ENCODE measurements at regions of chr11 and their contacts with region 1.

Region 1: DNA sequence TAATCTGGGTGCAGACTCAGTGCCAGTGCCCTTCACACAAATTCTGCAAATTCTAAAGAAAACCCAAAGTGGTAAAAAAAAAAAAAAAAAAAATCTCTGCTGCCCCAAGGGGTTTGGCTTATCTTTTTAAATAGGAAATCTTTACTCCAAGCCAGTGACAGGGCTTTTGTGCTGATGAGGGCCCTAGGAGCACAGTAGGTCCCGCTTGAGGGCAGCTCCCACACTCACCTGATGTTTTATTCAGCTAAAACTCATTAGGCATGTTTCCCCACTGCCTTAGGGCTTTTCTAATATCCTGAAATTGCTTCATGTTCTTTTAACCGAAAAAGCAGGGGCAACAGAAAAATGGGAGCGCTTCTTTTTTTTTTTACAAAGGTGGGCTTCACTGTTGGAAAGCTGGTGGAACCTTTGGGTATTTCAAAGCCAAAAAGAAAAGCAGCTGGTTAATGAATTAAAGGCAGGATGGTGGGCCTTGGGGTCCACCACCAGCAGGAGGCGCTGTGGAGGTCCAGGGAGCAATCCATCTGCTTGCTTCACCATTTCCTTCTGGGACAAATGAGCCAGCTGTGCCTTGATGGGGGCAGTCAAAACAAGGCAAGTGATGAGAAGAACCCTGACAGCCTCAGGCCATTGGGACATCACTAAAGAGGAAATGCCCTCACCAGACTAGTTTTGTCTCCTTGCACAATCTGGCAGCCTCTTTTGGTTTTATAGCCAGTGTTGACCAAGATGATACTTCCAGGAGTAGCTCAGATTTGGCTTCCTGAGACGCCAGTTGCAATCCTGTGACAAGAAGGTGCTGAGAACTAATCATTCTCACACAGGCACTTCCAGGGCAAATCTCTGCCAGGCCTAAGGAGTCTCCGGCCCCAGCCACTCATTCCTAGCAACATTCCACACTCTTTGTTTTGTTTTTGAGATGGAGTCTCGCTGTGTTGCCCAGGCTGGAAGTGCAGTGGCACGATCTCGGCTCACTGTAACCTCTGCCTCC is 38.4 kb upstream of the WEE1 start:
- DNase-seq: no peak
- H3K4me3 ChIP-seq: no peak overlapping the region
- CTCF ChIP-seq: peak; percentile 63

Region 2: DNA sequence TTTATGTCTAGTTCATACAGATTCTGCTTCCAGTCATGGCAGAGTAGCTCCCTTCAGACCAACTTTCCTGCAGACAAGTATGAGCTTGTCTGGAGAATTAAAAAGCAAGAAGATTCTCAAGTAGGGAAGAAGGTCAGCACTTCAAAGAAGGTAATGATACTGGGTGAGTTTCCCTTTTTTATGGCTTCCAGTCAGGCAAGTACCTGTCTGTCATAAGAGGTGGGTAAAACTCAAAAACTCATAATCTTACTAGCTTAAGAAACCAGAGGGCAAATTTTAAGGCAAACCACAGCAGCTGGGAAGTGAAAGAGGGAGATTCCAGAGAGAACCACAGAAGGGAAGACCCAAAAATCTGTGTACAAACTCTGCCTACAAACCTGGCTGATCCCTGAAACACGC is 324.2 kb before region 1 on chr11:
- CTCF ChIA-PET with region 1: no interaction called
- POLR2A ChIA-PET with region 1: no interaction called
- DNase-seq: no peak
- H3K4me3 ChIP-seq: no peak overlapping the region
- CTCF ChIP-seq: no peak

Region 3: GRCh38 chr11:9516113-9516512 is 19.0 kb before region 1 on chr11:
- CTCF ChIA-PET with region 1: interaction called, 13 read pairs
- POLR2A ChIA-PET with region 1: no interaction called
- DNase-seq: no peak
- H3K4me3 ChIP-seq: no peak overlapping the region
- CTCF ChIP-seq: no peak

Region 4: DNA sequence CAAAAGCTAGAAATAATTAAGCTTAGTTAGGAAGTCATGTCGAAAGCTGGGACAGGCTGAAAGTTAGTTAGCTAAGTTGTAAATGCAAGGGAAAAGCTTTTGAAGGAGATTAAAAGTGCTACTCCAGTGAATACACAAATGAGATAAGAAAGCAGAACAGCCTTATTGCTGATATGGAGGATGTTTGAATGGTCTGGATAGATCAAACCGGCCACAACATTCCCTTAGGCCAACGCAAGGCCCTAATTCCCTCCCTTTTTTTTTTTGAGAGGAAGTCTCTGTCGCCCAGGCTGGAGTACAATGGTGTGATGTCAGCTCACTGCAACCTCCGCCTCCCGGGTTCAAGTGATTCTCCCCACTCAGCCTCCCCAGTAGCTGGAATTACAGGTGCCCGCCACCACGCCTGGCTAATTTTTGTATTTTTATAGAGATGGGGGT is 15.1 kb after region 1 on chr11:
- CTCF ChIA-PET with region 1: interaction called, 11 read pairs
- POLR2A ChIA-PET with region 1: no interaction called
- DNase-seq: no peak
- H3K4me3 ChIP-seq: no peak overlapping the region
- CTCF ChIP-seq: no peak

Region 5: GRCh38 chr11:9565822-9566560 is 30.9 kb after region 1 on chr11:
- CTCF ChIA-PET with region 1: interaction called, 10 read pairs
- POLR2A ChIA-PET with region 1: no interaction called
- DNase-seq: peak; percentile 100
- H3K4me3 ChIP-seq: no peak overlapping the region
- CTCF ChIP-seq: no peak

Region 6: DNA sequence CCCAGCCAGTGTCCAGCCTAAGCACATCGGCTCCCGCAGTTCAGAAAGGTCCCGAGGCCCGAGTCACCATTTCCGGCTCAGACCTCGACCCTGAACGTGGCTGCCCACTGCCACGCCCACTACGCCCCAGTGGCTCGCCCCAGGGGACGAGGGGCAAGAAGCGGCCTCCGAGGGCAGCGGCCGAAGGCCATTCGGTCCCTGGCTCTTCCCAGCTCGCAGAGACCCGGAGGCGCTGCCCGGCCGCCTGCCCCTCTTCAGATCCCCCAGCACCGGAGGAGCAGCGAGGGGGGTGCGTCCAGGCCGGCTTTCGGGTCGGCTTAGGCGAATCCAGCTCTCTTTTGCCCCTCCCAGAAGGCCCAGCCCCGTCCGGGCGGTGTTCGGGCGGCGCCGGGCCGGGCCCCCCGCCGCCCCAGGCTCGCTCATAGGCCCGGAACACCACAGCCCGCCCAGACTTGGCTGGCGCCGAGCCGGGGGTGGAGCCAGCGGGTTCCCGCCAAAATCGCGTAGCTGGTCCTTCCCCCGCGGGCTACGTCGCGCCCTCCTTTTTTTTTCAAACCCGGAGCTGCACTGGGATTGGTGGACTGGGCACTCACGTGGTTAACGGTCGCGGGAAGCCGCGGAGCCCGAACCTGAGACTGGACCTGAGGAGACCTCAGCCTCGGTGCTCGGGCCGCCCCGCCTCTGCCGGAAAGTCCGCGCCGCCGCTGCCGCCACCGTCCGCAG is 38.1 kb after region 1 on chr11 and contains the start of gene WEE1:
- CTCF ChIA-PET with region 1: interaction called, 12 read pairs
- POLR2A ChIA-PET with region 1: no interaction called
- DNase-seq: peak; percentile 79
- H3K4me3 ChIP-seq: peak within 1 kb of the TSS; percentile 81
- CTCF ChIP-seq: no peak

Region 7: DNA sequence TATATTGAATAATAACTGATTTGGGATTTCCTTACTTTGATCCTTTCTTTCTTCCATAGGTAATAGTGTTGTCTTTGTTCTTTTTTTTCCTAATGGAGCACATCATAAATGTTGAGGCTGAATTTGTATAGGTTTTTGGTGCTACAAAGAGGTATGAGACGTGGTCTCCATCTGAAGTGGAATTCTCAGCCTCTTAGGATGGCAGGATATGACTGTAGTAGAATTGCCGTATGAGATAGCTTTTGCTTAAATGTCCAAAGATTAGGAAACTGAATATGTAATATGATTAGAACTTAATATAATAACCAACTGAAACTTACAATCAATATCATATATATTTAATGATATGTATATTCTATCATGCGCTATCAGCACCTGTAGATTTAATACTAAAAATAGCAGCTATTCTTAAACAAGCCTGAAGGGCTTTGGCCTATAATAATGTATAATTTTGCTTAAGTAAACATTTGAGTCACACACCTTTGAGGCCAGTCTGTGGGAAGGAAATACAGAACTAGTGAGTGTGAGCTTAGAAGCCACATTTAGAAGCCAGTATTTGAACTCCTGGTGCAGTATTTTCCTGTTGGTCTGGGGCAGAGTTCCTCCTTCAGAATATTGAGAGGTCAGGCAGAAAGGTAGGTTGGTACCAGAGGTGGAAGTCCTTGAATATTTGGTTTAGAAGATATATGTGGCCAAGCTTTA is 191.4 kb after region 1 on chr11:
- CTCF ChIA-PET with region 1: no interaction called
- POLR2A ChIA-PET with region 1: no interaction called
- DNase-seq: peak; percentile 19
- H3K4me3 ChIP-seq: no peak overlapping the region
- CTCF ChIP-seq: no peak

Region 8: DNA sequence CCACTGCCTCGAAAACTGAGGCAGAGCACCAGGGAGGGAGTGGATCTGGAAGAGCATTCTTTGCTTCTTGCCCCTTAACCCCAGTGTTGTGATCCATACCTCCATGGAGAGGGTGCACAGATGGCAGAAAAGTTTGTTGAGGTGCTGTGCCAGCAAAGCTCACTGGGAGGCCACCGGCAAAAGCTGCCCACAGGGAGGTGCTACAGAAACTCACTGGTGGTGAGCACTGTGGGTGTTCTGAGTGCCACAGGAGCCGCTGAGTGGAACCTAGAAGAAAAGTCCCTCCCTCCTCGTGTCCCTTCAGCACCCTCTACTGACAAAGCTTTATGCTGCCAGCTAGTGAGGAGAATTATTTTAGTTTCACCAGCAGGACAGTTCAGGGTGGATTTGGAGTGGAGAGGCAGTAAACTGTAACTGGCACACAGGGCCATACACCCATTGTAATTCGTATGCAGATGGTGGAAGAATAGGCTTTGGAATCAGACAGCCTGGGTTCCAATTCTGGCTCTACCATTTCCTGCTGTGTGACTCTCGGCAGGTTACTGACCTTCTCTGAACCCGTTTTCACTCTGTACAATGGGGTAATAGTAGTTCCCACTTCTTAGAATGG is 213.4 kb after region 1 on chr11:
- CTCF ChIA-PET with region 1: interaction called, 28 read pairs
- POLR2A ChIA-PET with region 1: no interaction called
- DNase-seq: no peak
- H3K4me3 ChIP-seq: no peak overlapping the region
- CTCF ChIP-seq: peak; percentile 54

Measured in AG04449 (cell line).